Mammary epithelial cell (primary cell): ENCODE measurements at regions of chr10 and their contacts with region 1.

Region 1: DNA sequence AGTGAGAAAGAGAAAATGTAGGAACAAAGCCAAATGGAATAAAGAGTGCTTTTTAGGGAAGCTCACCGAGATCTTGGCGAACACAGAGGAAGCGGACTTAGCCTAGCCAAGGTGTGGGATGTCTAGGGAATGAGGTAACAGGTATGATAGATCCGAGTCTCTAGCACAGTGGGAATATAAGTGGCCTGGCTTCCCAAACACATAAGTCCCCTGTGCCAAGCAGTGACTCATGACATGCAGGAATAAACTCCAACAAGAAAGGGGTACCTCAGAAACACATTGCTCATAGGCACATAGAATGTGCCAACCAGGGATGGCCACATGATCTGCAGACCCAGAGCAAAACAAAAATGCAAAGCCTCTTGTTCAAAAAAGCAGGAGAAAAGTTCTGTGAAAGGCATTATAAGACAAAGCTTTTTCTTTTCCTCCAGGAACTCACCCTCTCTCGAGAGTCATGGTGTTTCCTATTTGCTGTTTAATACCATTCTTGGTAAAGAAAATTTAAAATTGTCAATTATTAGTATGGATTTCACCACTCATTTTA is 542.5 kb downstream of the GATA3 start:
- DNase-seq: peak; percentile 84
- H3K4me3 ChIP-seq: no peak overlapping the region
- H3K27ac ChIP-seq: peak overlapping the region; percentile 17
- H3K4me1 ChIP-seq: peaks cover 28% of the 10 kb centered on the region
- H3K27me3 ChIP-seq: no peaks in the 10 kb centered on the region
- CTCF ChIP-seq: no peak

Region 2: GRCh38 chr10:8059959-8060703 is 536.9 kb before region 1 on chr10:
- CTCF ChIA-PET with region 1: no interaction called
- dilution Hi-C with region 1: no loop called
- in situ Hi-C with region 1: loop called in 1 of 2 experiments (anchors 10 kb)
- intact Hi-C with region 1: loop called (anchors 2 kb)
- DNase-seq: peak; percentile 82
- H3K4me3 ChIP-seq: peak overlapping the region; percentile 86 to 90 (median 87)
- H3K27ac ChIP-seq: peak overlapping the region; percentile 76
- H3K4me1 ChIP-seq: peaks cover 63% of the 10 kb centered on the region
- H3K27me3 ChIP-seq: no peaks in the 10 kb centered on the region
- CTCF ChIP-seq: no peak

Region 3: DNA sequence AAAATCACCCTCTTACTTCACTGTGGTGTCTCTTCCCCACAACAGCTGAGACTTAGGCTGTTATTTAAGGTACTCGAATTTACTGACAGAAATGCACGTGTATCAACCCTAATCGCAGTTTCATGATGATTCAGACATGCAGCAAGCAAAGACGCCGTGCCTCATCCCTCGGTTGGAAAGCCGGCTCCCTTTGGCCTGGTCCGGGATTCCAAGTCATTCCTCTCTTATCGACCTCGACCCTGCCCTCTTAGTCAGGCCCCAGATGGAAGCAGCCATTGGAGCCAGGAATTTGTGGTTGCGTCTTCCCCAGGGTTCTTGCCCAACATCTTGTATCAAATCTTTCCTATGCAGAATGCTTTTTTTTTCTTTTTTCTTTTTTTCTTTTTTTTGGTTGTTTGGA is 313.0 kb before region 1 on chr10:
- CTCF ChIA-PET with region 1: no interaction called
- dilution Hi-C with region 1: no loop called
- in situ Hi-C with region 1: no loop called
- intact Hi-C with region 1: no loop called
- DNase-seq: no peak
- H3K4me3 ChIP-seq: no peak overlapping the region
- H3K27ac ChIP-seq: no peak overlapping the region
- H3K4me1 ChIP-seq: peaks cover 9% of the 10 kb centered on the region
- H3K27me3 ChIP-seq: no peaks in the 10 kb centered on the region
- CTCF ChIP-seq: no peak

Region 4: GRCh38 chr10:8543361-8544069 is 53.5 kb before region 1 on chr10:
- CTCF ChIA-PET with region 1: no interaction called
- dilution Hi-C with region 1: no loop called
- in situ Hi-C with region 1: no loop called
- intact Hi-C with region 1: loop called (anchors 5 kb)
- DNase-seq: peak; percentile 80
- H3K4me3 ChIP-seq: no peak overlapping the region
- H3K27ac ChIP-seq: peak overlapping the region; percentile 29
- H3K4me1 ChIP-seq: peaks cover 17% of the 10 kb centered on the region
- H3K27me3 ChIP-seq: no peaks in the 10 kb centered on the region
- CTCF ChIP-seq: no peak

Region 5: GRCh38 chr10:8767631-8768030 is 170.6 kb after region 1 on chr10:
- CTCF ChIA-PET with region 1: no interaction called
- dilution Hi-C with region 1: no loop called
- in situ Hi-C with region 1: no loop called
- intact Hi-C with region 1: loop called (anchors 5 kb)
- DNase-seq: no peak
- H3K4me3 ChIP-seq: no peak overlapping the region
- H3K27ac ChIP-seq: no peak overlapping the region
- H3K4me1 ChIP-seq: peaks cover 7% of the 10 kb centered on the region
- H3K27me3 ChIP-seq: no peaks in the 10 kb centered on the region
- CTCF ChIP-seq: no peak

Region 6: GRCh38 chr10:8815969-8816368 is 219.0 kb after region 1 on chr10:
- CTCF ChIA-PET with region 1: no interaction called
- dilution Hi-C with region 1: no loop called
- in situ Hi-C with region 1: no loop called
- intact Hi-C with region 1: loop called (anchors 5 kb)
- DNase-seq: peak; percentile 63
- H3K4me3 ChIP-seq: no peak overlapping the region
- H3K27ac ChIP-seq: no peak overlapping the region
- H3K4me1 ChIP-seq: peaks cover 29% of the 10 kb centered on the region
- H3K27me3 ChIP-seq: no peaks in the 10 kb centered on the region
- CTCF ChIP-seq: no peak

Region 7: DNA sequence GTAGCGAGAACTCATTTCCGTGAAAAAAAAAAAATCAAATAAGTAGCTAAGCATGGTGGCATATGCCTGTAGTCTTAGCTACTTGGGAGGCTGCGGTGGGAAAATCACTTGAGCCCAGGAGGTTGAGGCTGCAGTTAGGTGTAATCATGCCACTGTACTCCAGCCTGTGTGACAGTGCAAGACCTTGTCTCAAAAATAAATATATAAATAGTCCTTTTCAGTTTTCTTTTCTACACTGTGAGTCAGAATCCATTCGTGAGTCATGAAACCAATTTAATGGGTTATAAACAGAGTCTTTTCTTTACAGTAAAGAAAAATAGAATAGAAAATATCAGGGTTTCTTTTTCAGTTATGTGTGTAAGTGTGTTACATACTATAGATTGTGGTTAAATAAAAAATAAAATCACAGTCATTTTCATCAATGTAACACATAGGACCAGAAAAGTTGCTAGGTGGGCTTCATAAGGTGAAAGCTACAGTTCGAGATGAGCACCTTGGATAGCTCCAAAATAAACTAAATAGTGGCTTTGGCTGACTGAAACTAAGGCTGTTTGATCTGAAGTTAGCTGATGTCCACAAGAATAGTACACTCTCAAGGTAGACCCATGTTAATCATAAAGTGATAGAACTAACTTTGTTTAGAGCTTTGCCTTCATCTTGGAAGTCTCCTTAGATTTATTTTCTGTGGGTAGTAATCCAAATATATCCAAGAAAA is 238.6 kb after region 1 on chr10:
- CTCF ChIA-PET with region 1: no interaction called
- dilution Hi-C with region 1: no loop called
- in situ Hi-C with region 1: no loop called
- intact Hi-C with region 1: no loop called
- DNase-seq: peak; percentile 41
- H3K4me3 ChIP-seq: no peak overlapping the region
- H3K27ac ChIP-seq: no peak overlapping the region
- H3K4me1 ChIP-seq: peaks cover under 1% of the 10 kb centered on the region
- H3K27me3 ChIP-seq: no peaks in the 10 kb centered on the region
- CTCF ChIP-seq: no peak